Cardiac septum (tissue), 1 donor: ENCODE measurements at regions of chr6 and their contacts with region 1.

Region 1: GRCh38 chr6:43990627-43991619 is 136.3 kb downstream of the MRPL14 start:
- DNase-seq: no peak

Region 2: GRCh38 chr6:43708860-43709653 is 281.9 kb before region 1 on chr6:
- intact Hi-C with region 1: no loop called
- DNase-seq: peak; percentile 73

Region 3: GRCh38 chr6:43798688-43799444 is 192.1 kb before region 1 on chr6:
- intact Hi-C with region 1: loop called (anchors 5 kb)
- DNase-seq: peak; percentile 92

Region 4: GRCh38 chr6:44049163-44049988 is 58.5 kb after region 1 on chr6:
- intact Hi-C with region 1: loop called (anchors 5 kb)
- DNase-seq: peak; percentile 66

Region 5: GRCh38 chr6:44064089-44064947 is 73.4 kb after region 1 on chr6:
- intact Hi-C with region 1: loop called (anchors 5 kb)
- DNase-seq: peak; percentile 88